WTC11 (cell line): ENCODE measurements at regions of chr11 and their contacts with region 1.

Region 1: GRCh38 chr11:61947486-61948210 is 2.5 kb upstream of the BEST1 start:
- DNase-seq: peak; percentile 89
- ATAC-seq: peak; percentile 93
- H3K4me3 Mint-ChIP-seq: no peak overlapping the region
- H3K27ac Mint-ChIP-seq: no peak overlapping the region
- H3K4me1 Mint-ChIP-seq: peaks cover 7% of the 10 kb centered on the region
- H3K27me3 Mint-ChIP-seq: peaks cover 3% of the 10 kb centered on the region
- CTCF ChIP-seq: peak; percentile 83

Region 2: GRCh38 chr11:61792310-61793085 is 155.2 kb before region 1 on chr11 and contains the starts of genes FEN1 and TMEM258:
- CTCF ChIA-PET with region 1: interaction called, 20 read pairs
- POLR2A ChIA-PET with region 1: no interaction called
- DNase-seq: peak; percentile 88
- ATAC-seq: peak; percentile 77
- H3K4me3 Mint-ChIP-seq: peak within 1 kb of the TSS; percentile 94
- H3K27ac Mint-ChIP-seq: peak within 1 kb of the TSS; percentile 100
- H3K4me1 Mint-ChIP-seq: peaks cover 21% of the 10 kb centered on the region
- H3K27me3 Mint-ChIP-seq: no peaks in the 10 kb centered on the region; the same call in 1 of the 2 replicates
- CTCF ChIP-seq: no peak
- total RNA-seq, gene FEN1: 72.3 to 96.3 TPM (median 73.2 TPM) in 3 replicates
- total RNA-seq, gene TMEM258: 175 to 192 TPM (median 190 TPM) in 3 replicates

Region 3: GRCh38 chr11:61885166-61885778 is 62.4 kb before region 1 on chr11:
- CTCF ChIA-PET with region 1: interaction called, 23 read pairs
- POLR2A ChIA-PET with region 1: interaction called, 10 read pairs
- DNase-seq: no peak
- ATAC-seq: peak; percentile 27
- H3K4me3 Mint-ChIP-seq: no peak overlapping the region
- H3K27ac Mint-ChIP-seq: no peak overlapping the region
- H3K4me1 Mint-ChIP-seq: peaks cover 22% of the 10 kb centered on the region
- H3K27me3 Mint-ChIP-seq: 0 out of 2 replicates have a peak, but pooled peaks cover 4% of the 10 kb centered on the region
- CTCF ChIP-seq: no peak

Region 4: GRCh38 chr11:61912530-61912898 is 35.1 kb before region 1 on chr11:
- CTCF ChIA-PET with region 1: interaction called, 34 read pairs
- POLR2A ChIA-PET with region 1: interaction called, 11 read pairs
- DNase-seq: peak; percentile 2
- ATAC-seq: no peak
- H3K4me3 Mint-ChIP-seq: no peak overlapping the region
- H3K27ac Mint-ChIP-seq: no peak overlapping the region; the same call in 1 of the 2 replicates
- H3K4me1 Mint-ChIP-seq: peaks cover 19% of the 10 kb centered on the region
- H3K27me3 Mint-ChIP-seq: peaks cover 17% of the 10 kb centered on the region
- CTCF ChIP-seq: no peak

Region 5: DNA sequence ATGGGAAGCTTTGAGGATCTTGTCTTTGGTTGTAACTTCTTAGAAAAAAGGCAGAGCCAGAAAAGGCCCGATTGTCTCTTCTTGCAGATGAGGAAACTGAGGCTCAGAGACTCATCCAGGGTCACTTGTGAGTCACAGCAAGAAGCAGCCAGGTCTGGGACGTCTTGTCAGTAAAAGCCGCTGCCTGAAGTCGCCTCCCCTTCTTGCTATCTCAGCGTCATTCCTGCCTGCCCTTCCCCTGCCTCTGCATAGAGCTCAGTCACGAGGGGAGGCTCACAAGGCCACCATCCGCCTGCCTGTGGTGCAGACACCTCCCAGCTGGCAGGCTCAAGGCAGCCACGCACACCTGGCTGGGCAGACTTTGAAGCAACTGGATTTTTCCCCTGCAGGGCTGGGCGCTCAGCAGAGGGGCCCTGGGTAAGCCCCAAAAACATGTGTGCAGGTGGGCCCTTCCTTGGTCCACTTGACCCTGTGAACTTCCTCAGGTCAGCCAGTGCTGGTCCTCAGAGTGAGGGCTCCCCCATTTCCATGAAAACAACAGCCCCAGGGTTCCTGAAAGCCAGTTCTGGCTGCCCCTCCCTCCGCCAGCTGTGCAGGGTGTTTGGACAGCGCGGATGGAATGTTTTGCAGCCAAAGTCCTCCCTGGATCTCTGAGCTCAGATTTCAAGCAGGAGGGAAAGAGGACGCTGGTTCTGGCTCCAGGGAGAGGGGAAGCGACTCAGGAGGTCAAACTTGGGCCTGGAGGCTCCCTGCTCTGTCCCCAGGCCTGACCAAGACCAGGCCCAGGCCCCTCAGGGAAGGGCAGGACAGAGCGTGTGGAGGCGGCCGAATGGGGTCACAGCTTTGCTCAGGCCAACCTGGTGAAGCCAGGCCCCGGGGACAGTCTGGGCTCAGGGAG is 24.2 kb before region 1 on chr11:
- CTCF ChIA-PET with region 1: interaction called, 74 read pairs
- POLR2A ChIA-PET with region 1: interaction called, 3 read pairs
- DNase-seq: peak; percentile 69
- ATAC-seq: peak; percentile 67
- H3K4me3 Mint-ChIP-seq: peak overlapping the region; percentile 41
- H3K27ac Mint-ChIP-seq: peak overlapping the region; percentile 94
- H3K4me1 Mint-ChIP-seq: peaks cover 42% of the 10 kb centered on the region
- H3K27me3 Mint-ChIP-seq: peaks cover 11% of the 10 kb centered on the region
- CTCF ChIP-seq: no peak

Region 6: GRCh38 chr11:61967116-61967923 is 19.7 kb after region 1 on chr11 and contains the start of gene FTH1:
- CTCF ChIA-PET with region 1: interaction called, 11 read pairs
- POLR2A ChIA-PET with region 1: interaction called, 23 read pairs
- DNase-seq: peak; percentile 85
- ATAC-seq: peak; percentile 76
- H3K4me3 Mint-ChIP-seq: peak within 1 kb of the TSS; percentile 94
- H3K27ac Mint-ChIP-seq: peak within 1 kb of the TSS; percentile 80
- H3K4me1 Mint-ChIP-seq: peaks cover 42% of the 10 kb centered on the region
- H3K27me3 Mint-ChIP-seq: no peaks in the 10 kb centered on the region; the same call in 1 of the 2 replicates
- CTCF ChIP-seq: no peak
- total RNA-seq, gene FTH1: 1,108 to 1,272 TPM (median 1,247 TPM) in 3 replicates

Region 7: DNA sequence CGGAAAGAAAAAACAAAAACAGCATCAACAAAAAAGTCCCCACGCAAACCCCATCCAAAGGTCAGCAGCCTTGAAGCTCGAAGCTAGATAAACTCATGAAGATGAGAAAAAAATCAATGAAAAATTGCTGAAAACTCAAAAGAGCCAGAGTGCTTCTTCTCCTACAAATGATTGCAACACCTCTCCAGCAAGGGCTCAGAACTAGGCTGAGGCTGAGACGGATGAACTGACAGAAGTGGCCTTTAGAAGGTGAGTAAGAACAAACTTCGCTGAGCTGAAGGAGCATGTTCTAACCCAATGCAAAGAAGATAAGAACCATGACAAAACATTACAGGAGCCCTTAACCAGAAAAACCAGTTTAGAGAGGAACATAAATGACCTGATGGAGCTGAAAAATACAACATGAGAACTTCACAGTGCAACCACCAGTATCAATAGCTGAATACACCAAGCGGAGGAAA is 38.3 kb after region 1 on chr11:
- CTCF ChIA-PET with region 1: no interaction called
- POLR2A ChIA-PET with region 1: no interaction called
- DNase-seq: no peak
- ATAC-seq: no peak
- H3K4me3 Mint-ChIP-seq: no peak overlapping the region
- H3K27ac Mint-ChIP-seq: no peak overlapping the region
- H3K4me1 Mint-ChIP-seq: peaks cover 18% of the 10 kb centered on the region
- H3K27me3 Mint-ChIP-seq: peaks cover 85% of the 10 kb centered on the region
- CTCF ChIP-seq: no peak